Left ventricle myocardium superior (tissue), 1 donor: ENCODE measurements at regions of chr2 and their contacts with region 1.

Region 1: DNA sequence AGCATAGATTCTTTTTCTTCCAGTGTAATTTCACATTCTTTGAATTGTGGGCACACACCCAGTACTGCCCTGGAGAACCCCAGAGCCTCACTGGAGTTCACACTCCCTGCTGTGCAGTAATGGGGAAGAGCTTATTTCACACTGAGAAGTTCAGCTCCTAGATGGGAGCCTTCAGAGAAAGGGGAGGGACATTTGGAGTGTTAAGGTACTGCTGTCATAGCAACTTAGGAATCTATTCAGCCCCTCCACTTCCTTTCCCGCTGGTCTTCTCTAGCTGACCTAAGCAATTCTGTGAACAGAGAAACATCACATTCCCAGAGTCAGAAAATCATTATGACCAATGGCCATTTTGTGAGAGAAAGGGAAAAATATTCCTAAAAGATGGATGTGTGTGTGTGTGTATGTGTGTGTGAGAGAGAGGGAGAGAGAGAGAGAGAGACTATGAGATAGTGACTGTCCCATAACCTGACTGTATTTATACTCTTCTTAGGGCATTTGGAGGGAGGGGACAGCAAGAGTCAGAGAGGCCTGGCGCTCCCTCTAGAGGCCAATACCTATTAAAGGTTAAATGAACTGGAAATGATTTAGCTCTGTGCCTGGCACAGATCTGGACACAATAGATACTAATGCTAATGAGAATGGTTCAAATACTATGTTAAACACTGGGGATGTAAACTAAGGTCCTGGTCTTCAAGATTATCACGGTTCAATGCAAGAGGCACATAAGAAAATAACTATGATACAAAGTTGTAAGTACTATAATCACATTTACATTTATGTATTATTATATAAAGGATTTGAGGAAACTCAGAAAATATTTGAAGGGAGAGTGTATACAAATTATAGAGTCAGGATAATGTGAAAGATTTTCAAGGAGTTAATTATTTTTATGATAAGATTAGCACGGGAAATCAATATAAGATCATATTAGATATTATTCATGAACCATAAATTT is 41.5 kb upstream of the RPE start:
- DNase-seq: peak; percentile 34
- ATAC-seq: peak; percentile 63

Region 2: DNA sequence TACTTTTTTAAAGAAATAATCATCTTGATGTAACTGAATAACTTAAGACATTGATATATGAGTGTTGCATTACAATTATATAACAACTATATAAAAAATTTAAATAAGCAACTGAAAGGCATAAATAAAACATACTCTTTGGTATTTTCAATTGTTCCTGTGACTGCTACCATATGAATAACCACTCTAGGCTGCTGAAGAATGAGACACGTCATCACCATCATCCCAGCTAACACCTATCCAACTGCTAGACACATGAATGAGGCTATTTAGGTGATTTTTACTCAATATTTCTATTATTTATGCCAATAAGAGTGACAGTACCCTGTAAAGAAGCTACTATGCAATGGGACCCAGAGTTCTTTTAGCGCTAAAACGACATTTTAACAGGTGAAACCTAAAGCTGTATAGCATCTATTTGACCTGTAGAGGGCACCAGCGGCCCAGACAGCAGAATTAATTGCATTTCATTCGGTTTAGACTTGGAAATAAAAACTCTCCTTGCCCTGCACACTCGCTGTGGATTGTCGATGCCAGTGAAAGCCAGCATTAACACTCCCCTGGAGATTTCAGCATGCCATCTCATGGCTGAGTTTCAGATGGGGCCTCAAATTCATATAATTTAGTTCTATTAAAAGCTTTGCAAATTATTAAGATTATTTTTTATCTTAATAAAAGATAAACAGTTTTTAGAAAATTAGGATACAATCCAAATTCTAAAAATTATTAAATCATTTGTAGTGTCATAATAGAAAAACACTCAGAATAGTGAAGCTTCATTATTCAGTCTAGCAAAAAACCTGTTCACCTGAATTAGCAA is 626.5 kb before region 1 on chr2:
- intact Hi-C with region 1: loop called (anchors 10 kb)
- DNase-seq: peak; percentile 46
- ATAC-seq: peak; percentile 47